CD8-positive, alpha-beta memory T cell (primary cell): ENCODE measurements at regions of chr17 and their contacts with region 1.

Region 1: DNA sequence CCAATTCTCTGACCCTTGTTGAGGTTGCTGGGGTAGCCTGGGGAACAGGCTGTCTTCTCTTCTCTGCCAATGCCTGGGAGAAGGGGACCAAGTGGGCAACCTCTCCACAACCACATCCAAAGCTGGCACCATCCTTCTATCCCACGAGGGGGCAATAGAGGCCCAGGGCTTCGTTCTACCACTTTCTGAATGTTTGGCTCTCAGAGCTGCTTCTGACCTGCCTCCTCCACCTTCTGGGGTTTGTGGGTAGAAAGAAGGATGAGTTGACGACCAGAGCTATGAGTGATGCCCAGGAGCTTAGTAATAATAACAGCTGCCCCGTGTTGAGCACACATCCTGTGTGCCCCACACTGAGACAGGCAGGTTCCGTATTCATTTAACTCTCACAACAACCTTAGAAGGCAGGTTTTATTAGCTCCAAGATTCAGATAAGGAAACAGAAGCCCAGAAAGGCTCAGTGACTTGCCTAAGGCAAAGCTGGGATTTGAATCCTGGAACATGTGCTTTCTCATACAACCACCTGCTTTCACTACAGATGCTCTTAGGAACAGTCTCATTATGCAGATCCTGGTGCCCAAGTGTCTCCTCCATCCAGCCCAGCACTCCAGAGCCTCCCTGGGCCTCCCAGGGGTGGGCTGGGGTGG is 11.1 kb downstream of the TSPOAP1 start:
- DNase-seq: peak; percentile 49 to 86 (median 76)
- H3K4me3 ChIP-seq: no peak overlapping the region
- H3K4me3 Mint-ChIP-seq: peak overlapping the region; percentile 1 to 68 (median 55)
- H3K27ac ChIP-seq: no peak overlapping the region
- H3K27ac Mint-ChIP-seq: peak overlapping the region; percentile 79 to 98 (median 94)
- H3K4me1 ChIP-seq: peaks cover 13% of the 10 kb centered on the region
- H3K4me1 Mint-ChIP-seq: peaks cover 16 to 23% (median 18%) of the 10 kb centered on the region in 3 donors
- H3K27me3 ChIP-seq: no peaks in the 10 kb centered on the region
- H3K27me3 Mint-ChIP-seq: no peaks in the 10 kb centered on the region

Region 2: GRCh38 chr17:58329035-58329809 is 11.7 kb after region 1 on chr17:
- CTCF ChIA-PET with region 1: interaction called, 46 read pairs
- POLR2A ChIA-PET with region 1: interaction called, 53 read pairs
- DNase-seq: peak; percentile 48 to 78 (median 72)
- H3K4me3 ChIP-seq: peak overlapping the region; percentile 98
- H3K4me3 Mint-ChIP-seq: peak overlapping the region; percentile 89 to 100 (median 95)
- H3K27ac ChIP-seq: peak overlapping the region; percentile 96
- H3K27ac Mint-ChIP-seq: peak overlapping the region; percentile 90 to 99 (median 98)
- H3K4me1 ChIP-seq: peaks cover 43% of the 10 kb centered on the region
- H3K4me1 Mint-ChIP-seq: peaks cover 48 to 64% (median 55%) of the 10 kb centered on the region in 3 donors
- H3K27me3 ChIP-seq: no peaks in the 10 kb centered on the region
- H3K27me3 Mint-ChIP-seq: peaks cover 0 to 6% of the 10 kb centered on the region in 2 donors

Region 3: DNA sequence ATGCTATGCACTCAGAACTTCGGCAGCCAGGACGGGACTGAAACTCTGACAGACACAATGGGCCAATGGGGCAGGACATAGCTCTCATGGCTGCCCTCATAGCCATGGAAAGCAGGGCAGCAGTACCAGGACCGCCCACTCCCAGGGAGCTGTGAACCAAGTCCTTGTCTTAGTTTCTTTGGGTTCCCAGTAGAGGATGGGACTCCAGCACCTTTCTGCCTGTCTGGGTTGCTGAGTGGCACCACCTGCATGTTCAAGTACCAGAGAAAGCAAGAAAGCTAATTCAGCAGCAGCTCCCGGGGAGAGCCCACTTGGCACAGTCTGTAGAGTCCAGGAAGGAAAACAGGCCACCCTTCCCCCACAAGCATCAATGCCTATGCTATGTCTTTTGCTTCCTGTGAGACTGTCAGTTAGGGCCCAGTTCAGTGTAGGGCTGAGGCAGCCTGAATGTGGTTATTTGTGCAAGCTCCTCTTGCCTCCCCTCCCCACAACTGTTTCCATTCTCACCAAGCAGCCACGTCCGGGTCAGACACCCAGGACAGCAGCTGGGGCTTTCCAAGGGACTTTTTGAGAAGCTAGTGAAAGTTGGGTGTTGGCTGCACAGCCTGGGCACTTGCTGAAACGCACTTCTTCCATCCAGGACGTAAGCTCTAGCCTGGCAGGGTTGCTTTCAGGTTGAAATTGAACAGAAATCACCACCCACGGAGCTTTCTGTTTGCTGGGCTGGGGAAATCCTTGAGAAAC is 26.7 kb after region 1 on chr17:
- CTCF ChIA-PET with region 1: interaction called, 504 read pairs
- POLR2A ChIA-PET with region 1: interaction called, 72 read pairs
- DNase-seq: peak; percentile 77 to 95 (median 85)
- H3K4me3 ChIP-seq: peak overlapping the region; percentile 86
- H3K4me3 Mint-ChIP-seq: peak overlapping the region; percentile 86 to 100 (median 95)
- H3K27ac ChIP-seq: peak overlapping the region; percentile 88
- H3K27ac Mint-ChIP-seq: peak overlapping the region; percentile 92 to 100 (median 99)
- H3K4me1 ChIP-seq: peaks cover 86% of the 10 kb centered on the region
- H3K4me1 Mint-ChIP-seq: peaks cover 75 to 99% (median 97%) of the 10 kb centered on the region in 3 donors
- H3K27me3 ChIP-seq: no peaks in the 10 kb centered on the region
- H3K27me3 Mint-ChIP-seq: no peaks in the 10 kb centered on the region

Region 4: GRCh38 chr17:58369214-58370031 is 51.9 kb after region 1 on chr17:
- CTCF ChIA-PET with region 1: interaction called, 11 read pairs
- POLR2A ChIA-PET with region 1: no interaction called
- DNase-seq: no peak
- H3K4me3 ChIP-seq: no peak overlapping the region
- H3K4me3 Mint-ChIP-seq: peak overlapping the region in 4 of 7 donors; percentile 27 to 88 (median 55)
- H3K27ac ChIP-seq: no peak overlapping the region
- H3K27ac Mint-ChIP-seq: peak overlapping the region in 7 of 8 donors; percentile 13 to 83 (median 70)
- H3K4me1 ChIP-seq: peaks cover 13% of the 10 kb centered on the region
- H3K4me1 Mint-ChIP-seq: peaks cover 23 to 45% (median 38%) of the 10 kb centered on the region in 3 donors
- H3K27me3 ChIP-seq: no peaks in the 10 kb centered on the region
- H3K27me3 Mint-ChIP-seq: no peaks in the 10 kb centered on the region

Region 5: GRCh38 chr17:58432806-58433572 is 115.4 kb after region 1 on chr17:
- CTCF ChIA-PET with region 1: interaction called, 10 read pairs
- POLR2A ChIA-PET with region 1: no interaction called
- DNase-seq: no peak
- H3K4me3 ChIP-seq: no peak overlapping the region
- H3K4me3 Mint-ChIP-seq: no peak overlapping the region
- H3K27ac ChIP-seq: no peak overlapping the region
- H3K27ac Mint-ChIP-seq: no peak overlapping the region
- H3K4me1 ChIP-seq: no peaks in the 10 kb centered on the region
- H3K4me1 Mint-ChIP-seq: no peaks in the 10 kb centered on the region
- H3K27me3 ChIP-seq: no peaks in the 10 kb centered on the region
- H3K27me3 Mint-ChIP-seq: no peaks in the 10 kb centered on the region

Region 6: GRCh38 chr17:58487589-58488427 is 170.3 kb after region 1 on chr17 and contains the start of gene HSF5:
- CTCF ChIA-PET with region 1: interaction called, 23 read pairs
- POLR2A ChIA-PET with region 1: interaction called, 8 read pairs
- DNase-seq: peak; percentile 56 to 83 (median 81)
- H3K4me3 ChIP-seq: peak within 1 kb of the TSS; percentile 12
- H3K4me3 Mint-ChIP-seq: peak within 1 kb of the TSS; percentile 59 to 82 (median 69)
- H3K27ac ChIP-seq: no peak within 1 kb of the TSS
- H3K27ac Mint-ChIP-seq: peak within 1 kb of the TSS in 5 of 8 donors; percentile 25 to 77 (median 63)
- H3K4me1 ChIP-seq: peaks cover 5% of the 10 kb centered on the region
- H3K4me1 Mint-ChIP-seq: peaks cover 8 to 14% (median 13%) of the 10 kb centered on the region in 3 donors
- H3K27me3 ChIP-seq: no peaks in the 10 kb centered on the region
- H3K27me3 Mint-ChIP-seq: no peaks in the 10 kb centered on the region
- total RNA-seq, gene HSF5: 5.4 to 5.5 TPM